Mammary epithelial cell (primary cell): ENCODE measurements at regions of chr13 and their contacts with region 1.

Region 1: GRCh38 chr13:60329221-60329983 is 67.6 kb upstream of the TDRD3 start:
- DNase-seq: peak; percentile 14
- H3K4me3 ChIP-seq: no peak overlapping the region
- H3K27ac ChIP-seq: no peak overlapping the region
- H3K4me1 ChIP-seq: no peaks in the 10 kb centered on the region
- H3K27me3 ChIP-seq: peaks cover 2% of the 10 kb centered on the region
- CTCF ChIP-seq: peak; percentile 34 to 73

Region 2: DNA sequence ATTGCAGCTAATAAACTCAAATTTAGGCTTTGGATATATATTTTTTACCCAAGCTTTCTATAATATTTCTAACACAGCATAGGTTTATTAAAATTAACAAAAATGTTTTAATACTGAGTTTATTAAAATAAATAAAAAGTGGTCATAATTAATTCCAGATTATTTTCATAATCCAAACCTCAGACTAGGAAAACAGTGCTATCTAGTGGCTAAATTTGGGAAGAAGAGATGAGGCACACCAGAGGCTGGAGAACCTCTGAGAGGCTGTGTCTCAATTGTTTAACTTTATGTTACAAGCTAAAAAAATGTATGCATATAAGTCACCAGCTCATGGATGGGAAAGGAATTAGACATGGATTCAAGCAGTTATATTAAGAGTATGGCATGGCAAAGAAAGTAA is 558.1 kb before region 1 on chr13:
- CTCF ChIA-PET with region 1: no interaction called
- dilution Hi-C with region 1: no loop called
- in situ Hi-C with region 1: no loop called
- intact Hi-C with region 1: loop called (anchors 1 kb)
- DNase-seq: no peak
- H3K4me3 ChIP-seq: no peak overlapping the region
- H3K27ac ChIP-seq: no peak overlapping the region
- H3K4me1 ChIP-seq: peaks cover 30% of the 10 kb centered on the region
- H3K27me3 ChIP-seq: no peaks in the 10 kb centered on the region
- CTCF ChIP-seq: peak; percentile 68 to 69

Region 3: GRCh38 chr13:59846843-59847620 is 482.4 kb before region 1 on chr13:
- CTCF ChIA-PET with region 1: interaction called, 4 read pairs
- dilution Hi-C with region 1: no loop called
- in situ Hi-C with region 1: no loop called
- intact Hi-C with region 1: loop called (anchors 2 kb)
- DNase-seq: no peak
- H3K4me3 ChIP-seq: no peak overlapping the region
- H3K27ac ChIP-seq: no peak overlapping the region
- H3K4me1 ChIP-seq: no peaks in the 10 kb centered on the region
- H3K27me3 ChIP-seq: no peaks in the 10 kb centered on the region
- CTCF ChIP-seq: peak in 1 of 2 donors; percentile 24

Region 4: DNA sequence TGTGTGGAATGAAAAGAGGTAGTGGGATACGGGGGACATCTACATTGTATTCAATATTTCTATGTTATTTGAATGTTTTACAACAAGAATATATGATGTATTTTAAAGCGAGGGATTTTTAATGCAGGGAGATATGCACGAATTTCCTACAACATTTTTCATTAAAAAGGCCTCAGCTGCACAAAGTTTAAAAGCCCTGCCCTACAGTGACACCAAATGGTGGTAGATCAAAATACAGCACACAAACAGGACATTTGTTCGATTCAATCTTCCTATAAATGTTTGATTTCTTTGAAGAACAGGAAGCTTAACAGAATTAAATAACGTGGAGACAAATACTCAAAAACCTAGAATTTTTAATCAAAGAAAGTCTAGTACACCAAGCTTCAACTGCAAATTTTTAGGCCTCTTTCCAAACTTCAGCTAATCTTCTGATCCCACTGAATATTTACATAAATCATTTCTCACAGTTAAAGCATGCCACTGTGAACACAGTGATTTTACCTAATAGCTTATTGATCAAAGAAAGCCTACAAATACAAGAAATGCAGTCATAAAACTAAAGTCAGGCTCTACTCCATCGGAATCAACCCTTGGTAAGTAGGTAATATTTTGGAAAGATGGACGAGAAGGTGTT is 422.9 kb before region 1 on chr13:
- CTCF ChIA-PET with region 1: no interaction called
- dilution Hi-C with region 1: no loop called
- in situ Hi-C with region 1: no loop called
- intact Hi-C with region 1: loop called (anchors 2 kb)
- DNase-seq: no peak
- H3K4me3 ChIP-seq: no peak overlapping the region
- H3K27ac ChIP-seq: no peak overlapping the region
- H3K4me1 ChIP-seq: no peaks in the 10 kb centered on the region
- H3K27me3 ChIP-seq: no peaks in the 10 kb centered on the region
- CTCF ChIP-seq: peak; percentile 41 to 72

Region 5: DNA sequence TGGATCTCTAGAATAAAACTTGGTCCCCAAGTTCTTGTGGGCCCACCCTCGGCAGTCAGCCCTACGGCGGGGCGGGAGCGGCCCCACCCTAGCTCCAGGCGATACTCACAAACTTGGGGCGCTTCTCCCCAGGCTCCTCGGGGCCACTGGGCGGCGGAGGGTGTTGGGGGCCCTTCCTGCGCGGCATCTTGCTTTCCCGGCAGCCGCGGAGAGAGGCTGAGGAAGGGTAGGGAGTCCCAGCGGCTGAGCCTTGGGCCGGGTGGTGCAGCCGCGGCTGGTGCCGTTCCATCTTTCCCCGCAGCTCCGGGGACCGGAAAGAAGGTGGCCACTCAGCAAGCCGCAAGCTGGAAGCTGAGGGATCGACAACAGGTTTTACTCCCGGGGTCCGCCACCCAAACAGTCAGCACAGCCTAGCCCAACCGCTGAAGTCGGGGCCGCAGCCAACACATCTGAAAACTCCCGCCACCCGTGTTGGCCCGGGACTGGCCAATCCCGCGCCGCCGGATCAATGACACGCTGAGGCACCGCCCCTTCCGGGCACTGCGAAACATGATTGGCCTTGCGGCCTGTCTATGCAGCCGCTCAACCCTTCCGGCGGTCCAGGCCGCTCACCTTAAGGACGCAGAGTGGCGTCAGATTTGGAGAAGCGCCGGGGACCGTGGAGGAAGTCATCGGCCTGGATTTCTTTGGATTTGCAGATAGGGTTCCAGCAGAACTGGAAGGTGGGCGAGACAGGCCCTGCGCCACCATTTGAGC is 165.7 kb before region 1 on chr13 and contains the start of gene DIAPH3:
- CTCF ChIA-PET with region 1: no interaction called
- dilution Hi-C with region 1: no loop called
- in situ Hi-C with region 1: no loop called
- intact Hi-C with region 1: loop called (anchors 2 kb)
- DNase-seq: peak; percentile 94
- H3K4me3 ChIP-seq: peak within 1 kb of the TSS; percentile 72 to 87 (median 82)
- H3K27ac ChIP-seq: peak within 1 kb of the TSS; percentile 92
- H3K4me1 ChIP-seq: peaks cover 11% of the 10 kb centered on the region
- H3K27me3 ChIP-seq: no peaks in the 10 kb centered on the region
- CTCF ChIP-seq: no peak
- total RNA-seq, gene DIAPH3: 8.0 to 25.0 TPM

Region 6: GRCh38 chr13:61255035-61255796 is 925.8 kb after region 1 on chr13:
- CTCF ChIA-PET with region 1: no interaction called
- dilution Hi-C with region 1: no loop called
- in situ Hi-C with region 1: no loop called
- intact Hi-C with region 1: no loop called
- DNase-seq: no peak
- H3K4me3 ChIP-seq: no peak overlapping the region
- H3K27ac ChIP-seq: no peak overlapping the region
- H3K4me1 ChIP-seq: no peaks in the 10 kb centered on the region
- H3K27me3 ChIP-seq: no peaks in the 10 kb centered on the region
- CTCF ChIP-seq: peak in 1 of 2 donors; percentile 16